ENCODE measurements at regions of chr10 and their contacts with region 1.

Region 1: DNA sequence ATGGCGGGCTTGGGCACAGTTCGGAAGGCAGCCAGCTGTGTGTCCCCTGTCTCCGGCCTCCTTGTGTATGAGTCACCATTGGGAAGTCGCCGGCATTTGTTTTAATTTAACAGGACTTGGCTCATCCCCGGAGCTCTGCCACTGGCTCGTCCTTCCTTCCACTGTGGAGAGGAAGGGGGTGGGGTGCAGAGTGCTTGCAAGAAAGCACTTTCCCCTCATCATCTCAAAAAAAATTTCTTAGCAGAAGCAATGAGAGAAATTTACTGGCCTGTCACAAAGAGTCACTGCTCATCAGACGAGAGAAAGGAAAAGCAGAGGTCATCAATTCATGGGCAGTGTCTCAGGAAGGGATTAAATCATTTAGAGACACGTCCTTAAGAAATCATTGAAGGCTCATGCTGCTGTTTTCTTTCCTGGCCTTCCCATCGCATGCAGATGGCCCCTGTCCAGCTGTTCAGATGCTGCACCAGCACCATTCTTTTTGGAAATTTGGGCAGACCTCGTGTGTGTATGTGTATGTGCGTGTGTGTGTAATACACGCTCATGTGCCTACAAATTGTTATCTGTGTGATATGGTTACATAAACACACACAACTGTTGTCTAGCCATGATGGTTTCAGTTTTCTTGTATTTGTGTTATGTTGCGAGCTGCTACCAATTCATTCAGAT is 93.3 kb downstream of the BMS1 start:
- DNase-seq: no peak
- H3K4me3 ChIP-seq: no peak overlapping the region
- H3K27ac ChIP-seq: no peak overlapping the region
- H3K4me1 ChIP-seq: no peaks in the 10 kb centered on the region
- H3K27me3 ChIP-seq: no peaks in the 10 kb centered on the region
- CTCF ChIP-seq: no peak

Region 2: DNA sequence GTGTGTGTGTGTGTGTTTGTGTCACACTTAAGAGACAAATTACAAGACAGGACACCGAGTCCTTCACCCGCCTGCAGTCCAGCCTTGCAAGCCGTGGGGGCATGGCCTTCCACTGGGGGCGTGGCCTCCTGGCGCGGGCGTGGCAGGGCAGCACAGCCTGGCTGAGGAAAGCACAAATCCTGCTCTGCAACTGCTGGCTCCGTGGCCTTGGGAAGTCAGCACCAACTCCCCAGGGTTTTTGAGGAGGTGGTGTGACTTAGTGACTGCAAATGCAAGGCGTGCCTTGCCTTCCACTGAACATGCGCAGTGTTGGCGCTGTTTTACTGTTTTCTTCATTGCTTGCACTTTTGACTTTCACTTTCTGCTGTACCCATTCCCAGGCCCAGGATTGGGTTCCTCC is 106.3 kb before region 1 on chr10:
- CTCF ChIA-PET with region 1: no interaction called
- dilution Hi-C with region 1: no loop called
- in situ Hi-C with region 1: no loop called
- intact Hi-C with region 1: no loop called
- DNase-seq: no peak
- H3K4me3 ChIP-seq: no peak overlapping the region
- H3K27ac ChIP-seq: no peak overlapping the region
- H3K4me1 ChIP-seq: no peaks in the 10 kb centered on the region
- H3K27me3 ChIP-seq: no peaks in the 10 kb centered on the region
- CTCF ChIP-seq: no peak

Region 3: DNA sequence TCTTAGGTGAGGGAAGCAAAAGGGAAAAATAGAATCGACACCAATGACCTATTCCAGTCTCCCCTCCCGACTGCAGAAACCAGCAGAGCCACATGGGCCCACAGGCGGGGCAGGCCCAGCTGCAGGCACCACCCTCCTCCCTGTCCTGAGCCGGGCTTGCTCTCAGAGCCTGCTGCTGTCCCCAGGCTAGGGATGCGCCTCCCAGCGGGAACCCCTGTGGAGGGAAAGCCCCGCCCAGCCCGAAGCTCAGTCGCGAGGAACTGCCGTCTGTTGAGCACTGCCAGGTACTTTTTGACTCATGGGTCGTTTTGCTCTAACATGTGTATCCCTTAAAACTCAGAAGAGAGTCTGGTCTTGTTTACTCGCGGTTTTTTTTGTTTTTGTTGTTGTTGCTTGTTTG is 76.4 kb after region 1 on chr10:
- CTCF ChIA-PET with region 1: no interaction called
- dilution Hi-C with region 1: loop called (anchors 10 kb)
- in situ Hi-C with region 1: no loop called
- intact Hi-C with region 1: no loop called
- DNase-seq: peak; percentile 4
- H3K4me3 ChIP-seq: no peak overlapping the region
- H3K27ac ChIP-seq: no peak overlapping the region
- H3K4me1 ChIP-seq: peaks cover 5% of the 10 kb centered on the region
- H3K27me3 ChIP-seq: no peaks in the 10 kb centered on the region
- CTCF ChIP-seq: no peak

Region 4: DNA sequence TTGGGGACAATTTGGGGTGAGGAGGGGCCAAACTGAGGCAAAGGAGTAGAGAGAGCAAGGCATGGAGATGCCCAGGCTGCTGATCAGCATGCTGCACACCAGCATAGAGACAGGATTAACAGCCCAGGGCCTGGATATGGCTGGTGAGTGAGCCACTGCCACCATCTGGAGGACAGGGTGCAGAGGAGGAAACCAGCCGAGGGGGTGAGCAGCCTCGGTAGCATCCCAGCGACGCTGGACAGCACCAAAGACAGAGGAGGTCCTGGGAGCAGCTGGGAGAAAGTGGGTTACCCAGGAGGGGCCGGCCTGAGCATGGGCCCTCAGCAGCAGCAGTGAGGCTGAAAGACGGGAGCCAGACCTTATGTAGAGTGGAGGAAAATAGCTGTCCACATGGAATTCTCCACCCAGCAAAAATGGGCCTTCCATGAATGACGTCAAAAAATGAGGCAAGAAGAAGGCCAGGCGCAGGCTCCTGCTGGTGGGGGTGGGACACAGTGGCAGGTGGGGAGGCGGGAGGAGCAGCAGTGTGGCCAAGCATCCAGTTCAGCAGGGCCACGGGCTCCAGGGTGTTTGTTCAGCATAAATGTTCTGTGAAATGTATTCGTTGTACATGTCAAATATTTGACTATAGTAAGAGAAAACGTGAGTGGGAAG is 217.6 kb after region 1 on chr10:
- CTCF ChIA-PET with region 1: no interaction called
- dilution Hi-C with region 1: loop called (anchors 5 kb)
- in situ Hi-C with region 1: loop called in 1 of 2 experiments (anchors 5 kb)
- intact Hi-C with region 1: no loop called
- DNase-seq: peak; percentile 31
- H3K4me3 ChIP-seq: no peak overlapping the region
- H3K27ac ChIP-seq: no peak overlapping the region
- H3K4me1 ChIP-seq: no peaks in the 10 kb centered on the region
- H3K27me3 ChIP-seq: no peaks in the 10 kb centered on the region
- CTCF ChIP-seq: peak in 1 of 2 donors; percentile 54

Region 5: DNA sequence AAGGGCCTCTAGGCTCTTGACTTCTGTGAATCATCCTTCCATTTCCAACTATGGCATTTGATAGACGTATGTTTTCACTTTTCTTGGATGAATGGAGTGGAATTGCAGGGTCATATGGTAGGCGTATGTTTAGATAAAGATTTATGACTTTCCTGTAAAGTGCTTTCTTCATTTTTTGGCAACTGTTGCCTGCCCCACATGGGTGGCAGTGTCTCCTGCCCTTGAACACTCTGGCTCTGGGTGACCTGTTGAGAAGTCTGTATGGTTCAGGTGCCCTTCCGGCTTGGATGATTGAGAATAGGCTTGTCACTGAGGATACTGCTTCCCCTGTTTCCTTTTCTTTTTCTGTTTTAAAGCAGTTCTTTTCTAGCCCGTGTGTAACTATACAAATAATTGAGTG is 224.0 kb after region 1 on chr10:
- CTCF ChIA-PET with region 1: no interaction called
- dilution Hi-C with region 1: loop called (anchors 5 kb)
- in situ Hi-C with region 1: loop called in 1 of 2 experiments (anchors 25 kb)
- intact Hi-C with region 1: no loop called
- DNase-seq: no peak
- H3K4me3 ChIP-seq: no peak overlapping the region
- H3K27ac ChIP-seq: no peak overlapping the region
- H3K4me1 ChIP-seq: peaks cover 4% of the 10 kb centered on the region
- H3K27me3 ChIP-seq: no peaks in the 10 kb centered on the region
- CTCF ChIP-seq: no peak

Region 6: GRCh38 chr10:43340619-43341018 is 464.7 kb after region 1 on chr10:
- CTCF ChIA-PET with region 1: no interaction called
- dilution Hi-C with region 1: no loop called
- in situ Hi-C with region 1: no loop called
- intact Hi-C with region 1: no loop called
- DNase-seq: peak; percentile 88
- H3K4me3 ChIP-seq: no peak overlapping the region
- H3K27ac ChIP-seq: no peak overlapping the region
- H3K4me1 ChIP-seq: peaks cover 9% of the 10 kb centered on the region
- H3K27me3 ChIP-seq: peaks cover 5% of the 10 kb centered on the region
- CTCF ChIP-seq: no peak

Region 7: GRCh38 chr10:43644252-43644651 is 768.3 kb after region 1 on chr10:
- CTCF ChIA-PET with region 1: no interaction called
- dilution Hi-C with region 1: no loop called
- in situ Hi-C with region 1: no loop called
- intact Hi-C with region 1: no loop called
- DNase-seq: no peak
- H3K4me3 ChIP-seq: no peak overlapping the region
- H3K27ac ChIP-seq: no peak overlapping the region
- H3K4me1 ChIP-seq: peaks cover 2% of the 10 kb centered on the region
- H3K27me3 ChIP-seq: no peaks in the 10 kb centered on the region
- CTCF ChIP-seq: no peak

Measured in mammary epithelial cell (primary cell).